ENCODE measurements at regions of chr9 and their contacts with region 1.

Region 1: GRCh38 chr9:136991993-136992818 is at the start of gene PAXX:
- DNase-seq: peak; percentile 84 to 96 (median 93)
- ATAC-seq: peak; percentile 82
- H3K4me3 ChIP-seq: peak within 1 kb of the TSS; percentile 79 to 84
- H3K4me3 Mint-ChIP-seq: peak within 1 kb of the TSS; percentile 88
- H3K27ac ChIP-seq: peak within 1 kb of the TSS; percentile 69 to 88
- H3K27ac Mint-ChIP-seq: peak within 1 kb of the TSS; percentile 95
- H3K4me1 ChIP-seq: peaks cover 35% of the 10 kb centered on the region
- H3K4me1 Mint-ChIP-seq: peaks cover 34% of the 10 kb centered on the region
- H3K27me3 ChIP-seq: no peaks in the 10 kb centered on the region
- H3K27me3 Mint-ChIP-seq: peaks cover 4% of the 10 kb centered on the region
- CTCF ChIP-seq: no peak
- total RNA-seq, gene PAXX: 101 to 111 TPM

Region 2: DNA sequence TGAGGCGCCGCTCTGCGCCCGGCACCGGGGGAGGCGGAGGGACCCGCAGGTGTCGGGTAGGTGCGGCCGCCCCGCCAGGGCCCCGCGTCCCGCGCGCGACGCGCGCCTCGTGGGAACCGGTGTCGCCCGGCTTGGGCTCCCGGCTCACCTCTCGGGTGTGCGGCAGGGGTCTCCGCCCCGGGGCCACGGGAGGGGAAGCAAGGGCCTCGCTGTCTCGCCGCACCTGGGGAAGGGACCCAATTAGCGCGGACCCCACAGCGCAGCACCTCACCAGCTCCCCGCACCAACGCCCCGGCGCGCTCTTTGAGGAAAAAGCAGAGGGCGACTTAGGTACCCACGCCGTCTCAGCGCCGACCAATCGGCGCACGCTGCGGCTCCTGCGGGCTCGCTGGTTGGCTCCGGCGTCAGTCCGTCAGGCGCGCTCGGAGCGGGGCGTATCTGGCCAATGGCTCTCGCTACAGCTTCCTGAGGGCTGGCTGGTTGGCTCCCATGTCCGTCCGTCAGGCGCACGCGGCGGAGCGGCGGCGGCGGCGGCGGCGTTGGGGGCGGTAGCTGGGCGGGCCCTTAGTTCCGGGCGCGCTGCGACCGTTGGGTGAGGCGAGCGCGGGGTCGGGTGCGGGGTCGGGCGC is 106.1 kb before region 1 on chr9 and contains the start of gene TRAF2:
- CTCF ChIA-PET with region 1: interaction called, 3 read pairs
- POLR2A ChIA-PET with region 1: no interaction called
- intact Hi-C with region 1: loop called in 1 of 2 experiments (anchors 1 kb)
- DNase-seq: peak; percentile 94 to 100 (median 97)
- ATAC-seq: peak; percentile 88
- H3K4me3 ChIP-seq: peak within 1 kb of the TSS; percentile 83 to 85
- H3K4me3 Mint-ChIP-seq: peak within 1 kb of the TSS; percentile 83
- H3K27ac ChIP-seq: peak within 1 kb of the TSS; percentile 53 to 92
- H3K27ac Mint-ChIP-seq: peak within 1 kb of the TSS; percentile 95
- H3K4me1 ChIP-seq: peaks cover 43% of the 10 kb centered on the region
- H3K4me1 Mint-ChIP-seq: peaks cover 36% of the 10 kb centered on the region
- H3K27me3 ChIP-seq: no peaks in the 10 kb centered on the region
- H3K27me3 Mint-ChIP-seq: no peaks in the 10 kb centered on the region
- CTCF ChIP-seq: no peak
- total RNA-seq, gene TRAF2: 7.1 to 11.8 TPM

Region 3: GRCh38 chr9:136949817-136950655 is 42.2 kb before region 1 on chr9:
- CTCF ChIA-PET with region 1: interaction called, 10 read pairs
- POLR2A ChIA-PET with region 1: interaction called, 9 read pairs
- intact Hi-C with region 1: loop called (anchors 1 kb)
- DNase-seq: peak; percentile 93 to 98 (median 97)
- ATAC-seq: peak; percentile 96
- H3K4me3 ChIP-seq: peak overlapping the region; percentile 68 to 70
- H3K4me3 Mint-ChIP-seq: peak overlapping the region; percentile 85
- H3K27ac ChIP-seq: peak overlapping the region; percentile 65 to 75
- H3K27ac Mint-ChIP-seq: peak overlapping the region; percentile 90
- H3K4me1 ChIP-seq: peaks cover 11% of the 10 kb centered on the region
- H3K4me1 Mint-ChIP-seq: peaks cover 14% of the 10 kb centered on the region
- H3K27me3 ChIP-seq: no peaks in the 10 kb centered on the region
- H3K27me3 Mint-ChIP-seq: no peaks in the 10 kb centered on the region
- CTCF ChIP-seq: peak; percentile 51

Region 4: DNA sequence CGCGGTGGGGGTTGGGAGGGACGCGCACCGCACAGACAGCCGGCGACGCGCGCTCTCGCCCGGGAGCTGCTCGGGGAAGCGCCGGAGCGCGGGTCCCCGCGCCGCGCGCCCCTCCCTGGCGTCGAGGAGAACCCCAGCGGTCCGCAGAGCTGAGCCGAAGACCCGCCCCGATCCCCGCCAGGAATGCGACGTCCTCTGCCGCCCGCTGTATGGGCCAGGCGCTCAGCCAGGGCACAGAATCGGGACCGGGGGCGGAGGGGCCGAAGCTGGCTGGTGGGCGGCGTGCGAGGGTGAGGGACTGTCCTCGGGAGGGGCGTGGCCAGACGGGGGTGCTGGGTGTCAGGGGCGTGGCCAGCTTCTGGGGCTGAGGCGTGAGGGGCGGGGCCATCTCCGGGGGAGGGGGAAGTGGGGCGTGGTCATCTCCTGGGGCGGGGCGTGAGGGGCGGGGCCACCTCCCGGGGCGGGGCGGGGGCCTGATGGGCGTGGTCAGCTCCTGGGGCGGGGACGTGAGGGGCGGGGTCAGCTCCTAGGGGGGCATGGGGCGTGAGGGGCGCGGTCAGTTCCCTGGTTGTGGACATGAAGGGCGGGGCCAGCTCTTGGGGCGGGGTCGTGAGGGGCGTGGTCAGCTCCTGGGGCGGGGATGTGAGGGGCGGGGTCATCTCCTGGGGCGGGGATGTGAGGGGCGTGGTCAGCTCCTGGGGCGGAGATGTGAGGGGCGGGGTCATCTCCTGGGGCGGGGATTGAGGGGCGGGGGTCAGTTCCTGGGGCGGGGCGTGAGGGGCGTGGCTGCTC is 13.9 kb before region 1 on chr9:
- CTCF ChIA-PET with region 1: interaction called, 7 read pairs
- POLR2A ChIA-PET with region 1: interaction called, 7 read pairs
- intact Hi-C with region 1: loop called (anchors 1 kb)
- DNase-seq: peak; percentile 47 to 87 (median 73)
- ATAC-seq: peak; percentile 81
- H3K4me3 ChIP-seq: peak overlapping the region; percentile 26 to 55
- H3K4me3 Mint-ChIP-seq: peak overlapping the region; percentile 51
- H3K27ac ChIP-seq: no peak overlapping the region
- H3K27ac Mint-ChIP-seq: no peak overlapping the region
- H3K4me1 ChIP-seq: peaks cover 37% of the 10 kb centered on the region
- H3K4me1 Mint-ChIP-seq: peaks cover 21% of the 10 kb centered on the region
- H3K27me3 ChIP-seq: no peaks in the 10 kb centered on the region
- H3K27me3 Mint-ChIP-seq: no peaks in the 10 kb centered on the region
- CTCF ChIP-seq: no peak

Region 5: GRCh38 chr9:137029058-137029936 is 37.1 kb after region 1 on chr9:
- CTCF ChIA-PET with region 1: interaction called, 23 read pairs
- POLR2A ChIA-PET with region 1: interaction called, 9 read pairs
- intact Hi-C with region 1: loop called in 1 of 2 experiments (anchors 2 kb)
- DNase-seq: peak; percentile 49 to 83 (median 70)
- ATAC-seq: peak; percentile 33
- H3K4me3 ChIP-seq: peak overlapping the region; percentile 69 to 70
- H3K4me3 Mint-ChIP-seq: peak overlapping the region; percentile 82
- H3K27ac ChIP-seq: peak overlapping the region; percentile 37 to 70
- H3K27ac Mint-ChIP-seq: peak overlapping the region; percentile 82
- H3K4me1 ChIP-seq: peaks cover 74% of the 10 kb centered on the region
- H3K4me1 Mint-ChIP-seq: peaks cover 45% of the 10 kb centered on the region
- H3K27me3 ChIP-seq: no peaks in the 10 kb centered on the region
- H3K27me3 Mint-ChIP-seq: no peaks in the 10 kb centered on the region
- CTCF ChIP-seq: peak; percentile 61

Measured in CD8-positive, alpha-beta T cell (primary cell).